Sciatic nerve (tissue), 2 donors: ENCODE measurements at regions of chrX and their contacts with region 1.

Region 1: DNA sequence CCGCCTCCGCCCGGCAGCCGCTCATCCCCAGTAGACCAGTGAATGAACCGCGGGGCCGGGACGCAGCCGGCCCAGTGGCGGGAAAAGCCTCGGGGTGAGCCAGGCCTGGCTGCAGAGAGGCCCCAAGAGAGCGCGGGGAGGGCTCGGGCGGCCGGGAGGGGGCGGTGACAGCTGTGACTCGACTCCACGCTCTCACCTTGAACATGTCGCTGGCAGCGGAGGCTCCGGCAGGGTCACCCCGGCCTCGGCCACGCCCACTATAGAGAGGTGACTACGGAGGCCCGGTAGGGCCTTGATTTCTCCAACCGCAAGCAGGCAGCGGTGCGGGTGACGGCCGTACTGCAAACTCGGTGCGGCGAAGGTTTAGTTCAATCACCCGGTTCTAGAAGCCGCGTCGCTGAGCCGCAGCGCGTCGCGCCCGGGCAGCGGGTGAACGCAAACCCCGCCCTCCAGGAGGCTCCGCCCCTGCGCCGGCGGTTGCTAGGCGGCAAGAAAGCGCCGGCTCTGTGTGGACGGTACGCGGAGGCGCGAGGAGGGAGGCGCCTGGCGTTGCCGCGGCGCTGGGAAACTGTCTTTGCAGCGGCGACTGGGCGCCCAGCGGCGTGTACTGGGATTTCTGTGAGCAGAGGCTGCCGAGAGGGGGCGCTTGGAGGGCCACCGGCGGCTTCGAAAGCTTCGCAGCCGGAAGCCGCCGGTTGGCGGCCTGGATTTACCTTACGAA is at the starts of genes APOO and CXorf58:
- DNase-seq: peak; percentile 93
- ATAC-seq: peak; percentile 99
- total RNA-seq, gene APOO: 38.6 TPM
- total RNA-seq, gene CXorf58: not detected

Region 2: DNA sequence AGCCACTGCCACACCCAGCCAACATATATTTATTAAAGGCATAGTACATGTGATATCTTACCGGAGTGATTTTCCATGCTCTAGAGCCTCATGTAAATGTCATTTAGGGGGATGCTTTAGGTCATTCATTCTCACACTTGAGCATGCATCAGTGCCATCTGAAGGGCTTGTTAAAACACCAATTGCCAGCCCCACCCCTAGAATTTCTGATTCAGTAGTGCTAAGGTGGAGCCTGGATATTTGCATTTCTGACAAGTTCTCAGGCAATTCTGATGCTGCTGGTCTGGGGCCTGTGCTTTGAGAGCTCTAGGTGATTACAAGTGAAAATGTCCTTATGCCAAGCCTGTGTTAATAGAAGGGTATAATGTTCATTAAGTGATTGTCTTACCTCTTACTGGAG is 1767.8 kb before region 1 on chrX:
- intact Hi-C with region 1: no loop called
- DNase-seq: no peak
- ATAC-seq: no peak

Region 3: DNA sequence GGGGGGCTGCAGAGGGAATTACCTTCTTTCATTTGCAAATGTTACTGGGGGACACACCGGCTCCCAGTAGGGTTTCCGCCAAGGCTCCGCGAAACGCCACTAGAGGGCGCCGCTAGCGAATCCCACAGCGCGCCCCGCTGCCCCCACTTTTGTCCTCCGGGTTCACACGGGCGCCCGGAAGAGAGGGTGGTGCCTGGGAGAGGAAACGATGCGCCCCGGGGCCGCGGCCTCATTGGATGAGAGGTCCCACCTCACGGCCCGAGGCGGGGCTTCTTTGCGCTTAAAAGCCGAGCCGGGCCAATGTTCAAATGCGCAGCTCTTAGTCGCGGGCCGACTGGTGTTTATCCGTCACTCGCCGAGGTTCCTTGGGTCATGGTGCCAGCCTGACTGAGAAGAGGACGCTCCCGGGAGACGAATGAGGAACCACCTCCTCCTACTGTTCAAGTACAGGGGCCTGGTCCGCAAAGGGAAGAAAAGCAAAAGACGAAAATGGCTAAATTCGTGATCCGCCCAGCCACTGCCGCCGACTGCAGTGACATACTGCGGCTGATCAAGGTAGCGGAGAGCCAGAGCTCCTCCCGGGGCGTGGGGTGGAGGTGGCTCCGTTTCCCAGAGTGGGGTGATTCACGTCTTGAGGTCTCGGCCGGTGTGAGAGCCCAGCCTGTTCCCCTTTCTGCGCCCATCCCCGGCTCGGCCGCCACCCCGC is 124.6 kb before region 1 on chrX and contains the start of gene SAT1:
- intact Hi-C with region 1: loop called (anchors 10 kb)
- DNase-seq: peak; percentile 97
- ATAC-seq: peak; percentile 98
- total RNA-seq, gene SAT1: 417 TPM